Transverse colon (tissue), 4 donors: ENCODE measurements at regions of chr19 and their contacts with region 1.

Region 1: DNA sequence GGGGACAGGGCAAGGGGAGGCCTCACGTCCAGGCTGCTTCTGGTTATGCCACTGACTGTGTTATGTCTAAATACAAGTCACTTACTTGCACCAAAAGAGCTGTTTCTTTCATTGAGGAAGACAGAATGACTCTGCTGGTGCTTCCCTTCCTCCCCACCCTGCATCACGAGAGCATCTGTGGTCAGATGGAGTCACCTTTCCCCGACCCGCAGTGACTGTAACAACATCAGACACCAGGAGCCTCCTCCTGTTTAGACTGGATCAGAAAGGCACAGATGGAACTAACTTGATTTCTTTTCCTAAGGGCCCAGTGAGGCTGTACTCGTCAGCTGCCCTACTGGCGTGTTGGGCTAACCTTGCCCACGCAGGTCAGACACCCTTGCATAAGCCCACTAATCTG is 90.3 kb upstream of the ZNF536 start:
- DNase-seq: no peak
- H3K4me3 ChIP-seq: no peak overlapping the region
- H3K27ac ChIP-seq: no peak overlapping the region
- H3K4me1 ChIP-seq: no peaks in the 10 kb centered on the region
- H3K27me3 ChIP-seq: peaks cover 4% of the 10 kb centered on the region
- CTCF ChIP-seq: no peak
- EP300 ChIP-seq: no peak
- POLR2A ChIP-seq: no peak

Region 2: DNA sequence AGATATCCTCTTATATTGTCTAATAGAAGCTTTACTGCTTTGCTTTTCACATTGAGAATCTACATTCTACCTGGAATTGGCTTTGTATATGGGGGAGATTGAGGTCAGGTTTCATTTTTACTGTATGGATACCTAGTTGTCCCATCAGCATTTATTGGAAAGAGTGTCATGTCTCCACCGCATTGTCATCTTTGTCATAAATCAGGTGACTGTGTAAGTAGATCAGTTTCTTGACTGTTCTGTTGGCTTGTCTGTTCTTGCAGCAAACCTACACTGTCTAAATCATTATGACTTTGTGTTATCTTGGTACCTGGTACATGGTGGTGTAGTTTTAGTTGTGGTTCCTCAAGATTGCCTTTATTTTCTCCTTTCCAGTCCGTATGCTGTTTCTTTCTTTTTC is 334.0 kb before region 1 on chr19:
- in situ Hi-C with region 1: no loop called
- intact Hi-C with region 1: loop called (anchors 5 kb)
- DNase-seq: no peak
- H3K4me3 ChIP-seq: no peak overlapping the region
- H3K27ac ChIP-seq: no peak overlapping the region
- H3K4me1 ChIP-seq: peaks cover 0 to 45% (median 20%) of the 10 kb centered on the region in 4 donors
- H3K27me3 ChIP-seq: no peaks in the 10 kb centered on the region
- CTCF ChIP-seq: no peak
- EP300 ChIP-seq: no peak
- POLR2A ChIP-seq: no peak

Region 3: GRCh38 chr19:30374865-30375552 is 93.1 kb after region 1 on chr19:
- in situ Hi-C with region 1: no loop called
- intact Hi-C with region 1: no loop called
- DNase-seq: no peak
- H3K4me3 ChIP-seq: peak overlapping the region in 3 of 4 donors; percentile 8 to 29 (median 8)
- H3K27ac ChIP-seq: no peak overlapping the region
- H3K4me1 ChIP-seq: no peaks in the 10 kb centered on the region
- H3K27me3 ChIP-seq: peaks cover 41% of the 10 kb centered on the region
- CTCF ChIP-seq: no peak
- EP300 ChIP-seq: no peak
- POLR2A ChIP-seq: no peak

Region 4: DNA sequence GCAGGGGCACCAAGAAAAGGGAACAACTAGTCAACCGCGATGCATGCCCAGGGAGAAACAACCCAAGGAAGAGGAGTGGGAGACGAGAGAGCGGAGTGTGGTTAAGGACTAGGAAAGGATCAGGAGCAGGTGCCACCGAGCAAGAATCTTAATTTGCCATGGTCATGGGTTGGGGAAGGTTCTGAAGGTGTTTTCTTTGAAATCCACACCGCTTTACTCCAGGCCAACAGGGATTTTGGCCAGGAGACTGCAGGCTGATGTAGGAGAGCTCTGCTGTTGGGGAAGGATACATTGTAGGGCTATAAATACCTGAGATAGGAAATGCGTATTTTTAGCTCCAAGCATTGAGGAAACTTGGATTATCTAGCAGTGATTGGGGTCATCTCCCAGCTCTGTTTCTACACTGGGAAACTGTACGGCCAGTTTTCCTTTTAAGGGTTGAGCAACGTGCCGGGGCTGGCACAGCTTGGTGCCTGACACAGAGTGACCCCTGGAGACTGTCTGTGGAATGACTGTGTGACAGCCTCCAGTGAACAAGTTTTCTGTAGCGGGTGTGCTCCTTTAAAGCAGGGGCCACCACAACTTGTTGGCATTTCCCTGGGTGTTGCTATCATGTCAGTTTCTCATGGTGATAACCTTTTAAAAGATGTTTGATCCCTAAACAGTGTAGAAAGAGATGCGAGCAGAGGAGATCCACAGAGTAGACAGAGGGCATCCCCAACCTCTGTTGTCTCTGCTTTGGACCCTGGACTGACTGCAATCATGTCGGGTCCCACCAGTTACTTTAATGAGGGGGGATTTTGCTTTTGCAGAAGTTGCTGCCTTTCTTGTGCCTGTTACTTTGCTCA is 124.5 kb after region 1 on chr19:
- in situ Hi-C with region 1: no loop called
- intact Hi-C with region 1: no loop called
- DNase-seq: peak; percentile 16
- H3K4me3 ChIP-seq: no peak overlapping the region
- H3K27ac ChIP-seq: no peak overlapping the region
- H3K4me1 ChIP-seq: no peaks in the 10 kb centered on the region
- H3K27me3 ChIP-seq: no peaks in the 10 kb centered on the region
- CTCF ChIP-seq: peak in 2 of 5 experiments; percentile 13 to 23
- EP300 ChIP-seq: no peak
- POLR2A ChIP-seq: no peak